Naive thymus-derived CD4-positive, alpha-beta T cell (primary cell): ENCODE measurements at regions of chr20 and their contacts with region 1.

Region 1: GRCh38 chr20:35146920-35147574 is at the start of gene EDEM2:
- DNase-seq: peak; percentile 87 to 94 (median 93)
- ATAC-seq: peak; percentile 88
- H3K4me3 ChIP-seq: peak within 1 kb of the TSS; percentile 88
- H3K4me3 Mint-ChIP-seq: peak within 1 kb of the TSS; percentile 90 to 99 (median 96)
- H3K27ac ChIP-seq: peak within 1 kb of the TSS; percentile 75
- H3K27ac Mint-ChIP-seq: peak within 1 kb of the TSS; percentile 82 to 96 (median 93)
- H3K4me1 ChIP-seq: peaks cover 12 to 14% of the 10 kb centered on the region in 2 donors
- H3K4me1 Mint-ChIP-seq: peaks cover 19 to 50% (median 35%) of the 10 kb centered on the region in 7 donors
- H3K27me3 ChIP-seq: no peaks in the 10 kb centered on the region
- H3K27me3 Mint-ChIP-seq: peaks cover 0 to 6% (median 0%) of the 10 kb centered on the region in 5 donors
- total RNA-seq, gene EDEM2: 15.4 to 30.9 (median 20.0) TPM

Region 2: DNA sequence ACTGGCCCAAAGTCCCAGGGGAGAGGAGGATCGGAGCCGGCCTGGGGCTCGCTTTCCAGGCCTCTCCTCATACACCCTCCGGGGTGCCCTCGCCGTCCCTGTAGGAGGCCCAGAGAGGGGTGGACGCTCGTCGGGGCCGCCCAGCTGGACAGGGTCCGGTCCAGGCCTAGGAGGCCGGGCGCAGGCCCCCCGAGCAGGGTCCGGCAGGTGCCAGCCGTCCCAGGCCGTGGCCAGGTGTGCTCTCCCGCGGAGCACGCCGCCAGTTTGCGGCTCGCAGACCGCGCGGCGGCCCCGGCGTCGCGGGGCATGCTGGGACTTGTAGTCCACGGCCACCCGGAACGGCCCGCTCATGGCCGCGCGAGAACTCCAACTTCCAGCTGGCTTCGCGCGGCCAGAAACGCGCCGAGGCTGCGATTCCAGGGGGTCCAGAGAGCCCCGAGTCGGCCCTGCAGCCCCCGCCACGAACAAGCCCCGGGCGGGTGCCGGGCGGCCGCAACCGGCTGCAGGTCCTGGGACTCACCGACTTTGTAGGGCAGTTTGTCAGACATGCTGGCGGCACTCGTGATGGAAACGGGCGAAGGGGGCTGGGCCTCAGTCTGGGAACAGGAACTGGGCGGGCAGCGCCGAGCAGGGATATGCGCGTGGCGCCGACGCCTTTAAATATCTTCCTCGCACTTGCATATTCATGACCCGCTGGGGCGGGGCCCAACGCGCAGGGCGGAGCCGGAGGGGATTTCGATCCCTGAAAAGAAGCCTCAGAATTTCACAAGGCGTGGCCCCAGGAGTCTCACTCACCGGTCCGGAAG is 844.1 kb before region 1 on chr20 and contains the start of gene AHCY:
- CTCF ChIA-PET with region 1: no interaction called
- POLR2A ChIA-PET with region 1: no interaction called
- intact Hi-C with region 1: loop called in 1 of 2 experiments (anchors 2 kb)
- DNase-seq: peak; percentile 84 to 95 (median 92)
- ATAC-seq: peak; percentile 96
- H3K4me3 ChIP-seq: peak within 1 kb of the TSS; percentile 91
- H3K4me3 Mint-ChIP-seq: peak within 1 kb of the TSS; percentile 90 to 96 (median 91)
- H3K27ac ChIP-seq: peak within 1 kb of the TSS; percentile 87
- H3K27ac Mint-ChIP-seq: peak within 1 kb of the TSS; percentile 89 to 95 (median 93)
- H3K4me1 ChIP-seq: peaks cover 3 to 6% of the 10 kb centered on the region in 2 donors
- H3K4me1 Mint-ChIP-seq: peaks cover 0 to 27% (median 14%) of the 10 kb centered on the region in 7 donors
- H3K27me3 ChIP-seq: no peaks in the 10 kb centered on the region
- H3K27me3 Mint-ChIP-seq: peaks cover 0 to 2% (median 0%) of the 10 kb centered on the region in 5 donors
- total RNA-seq, gene AHCY: 19.1 to 62.9 (median 23.7) TPM

Region 3: DNA sequence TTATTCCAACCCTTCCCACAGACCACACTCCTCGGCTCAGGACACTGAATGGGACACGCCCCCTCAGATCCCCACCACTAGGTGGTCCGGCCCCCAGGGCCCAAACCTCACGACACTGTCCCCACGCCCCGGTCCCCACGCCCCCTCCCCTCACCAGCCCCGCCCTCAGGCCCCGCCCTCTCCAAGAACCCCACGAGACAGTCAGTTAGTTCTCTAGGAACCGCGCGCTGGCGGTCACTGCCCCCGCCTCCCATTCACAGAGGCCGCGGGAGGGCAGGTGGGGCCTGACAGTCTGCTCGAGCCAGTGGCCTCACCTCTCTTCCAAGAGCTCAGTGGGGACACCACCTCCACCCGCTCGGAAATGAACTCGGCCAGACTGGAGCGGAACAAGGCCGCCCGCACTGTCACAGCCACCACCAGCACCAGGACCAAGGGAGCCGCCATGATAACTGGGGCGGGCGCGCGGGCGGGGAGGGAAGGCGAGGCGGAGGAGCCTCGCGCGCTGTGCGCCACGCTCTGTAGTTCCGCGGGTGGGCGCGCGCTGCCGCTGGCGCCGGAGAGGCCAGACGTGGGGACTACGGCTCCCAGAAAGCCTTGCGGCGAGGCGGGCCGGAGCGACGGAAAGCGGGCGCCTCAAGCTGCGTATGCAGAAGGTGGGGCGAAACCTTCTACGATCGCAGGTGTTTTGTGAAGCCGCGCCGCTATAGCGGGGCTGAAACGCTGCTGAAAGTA is 470.2 kb before region 1 on chr20 and contains the start of gene PIGU:
- CTCF ChIA-PET with region 1: no interaction called
- POLR2A ChIA-PET with region 1: no interaction called
- intact Hi-C with region 1: loop called in 1 of 2 experiments (anchors 1 kb)
- DNase-seq: peak; percentile 88 to 97 (median 96)
- ATAC-seq: peak; percentile 99
- H3K4me3 ChIP-seq: peak within 1 kb of the TSS; percentile 63
- H3K4me3 Mint-ChIP-seq: peak within 1 kb of the TSS; percentile 95 to 99 (median 96)
- H3K27ac ChIP-seq: peak within 1 kb of the TSS; percentile 95
- H3K27ac Mint-ChIP-seq: peak within 1 kb of the TSS; percentile 85 to 98 (median 97)
- H3K4me1 ChIP-seq: peaks cover 4 to 5% of the 10 kb centered on the region in 2 donors
- H3K4me1 Mint-ChIP-seq: peaks cover 14 to 37% (median 24%) of the 10 kb centered on the region in 7 donors
- H3K27me3 ChIP-seq: no peaks in the 10 kb centered on the region
- H3K27me3 Mint-ChIP-seq: no peaks in the 10 kb centered on the region
- total RNA-seq, gene PIGU: 8.6 to 21.3 (median 16.1) TPM

Region 4: GRCh38 chr20:35008411-35009342 is 138.4 kb before region 1 on chr20:
- CTCF ChIA-PET with region 1: no interaction called
- POLR2A ChIA-PET with region 1: no interaction called
- intact Hi-C with region 1: no loop called
- DNase-seq: no peak
- ATAC-seq: no peak
- H3K4me3 ChIP-seq: no peak overlapping the region
- H3K4me3 Mint-ChIP-seq: no peak overlapping the region
- H3K27ac ChIP-seq: no peak overlapping the region
- H3K27ac Mint-ChIP-seq: peak overlapping the region in 4 of 9 donors; percentile 25 to 45 (median 41)
- H3K4me1 ChIP-seq: no peaks in the 10 kb centered on the region
- H3K4me1 Mint-ChIP-seq: peaks cover 0 to 4% (median 0%) of the 10 kb centered on the region in 7 donors
- H3K27me3 ChIP-seq: no peaks in the 10 kb centered on the region
- H3K27me3 Mint-ChIP-seq: no peaks in the 10 kb centered on the region

Region 5: GRCh38 chr20:35063168-35063567 is 83.9 kb before region 1 on chr20:
- CTCF ChIA-PET with region 1: no interaction called
- POLR2A ChIA-PET with region 1: no interaction called
- intact Hi-C with region 1: no loop called
- DNase-seq: no peak
- ATAC-seq: no peak
- H3K4me3 ChIP-seq: no peak overlapping the region
- H3K4me3 Mint-ChIP-seq: no peak overlapping the region
- H3K27ac ChIP-seq: no peak overlapping the region
- H3K27ac Mint-ChIP-seq: peak overlapping the region in 1 of 9 donors; percentile 16
- H3K4me1 ChIP-seq: peaks cover 0 to 5% of the 10 kb centered on the region in 2 donors
- H3K4me1 Mint-ChIP-seq: peaks cover 45 to 91% (median 75%) of the 10 kb centered on the region in 7 donors
- H3K27me3 ChIP-seq: no peaks in the 10 kb centered on the region
- H3K27me3 Mint-ChIP-seq: no peaks in the 10 kb centered on the region

Region 6: DNA sequence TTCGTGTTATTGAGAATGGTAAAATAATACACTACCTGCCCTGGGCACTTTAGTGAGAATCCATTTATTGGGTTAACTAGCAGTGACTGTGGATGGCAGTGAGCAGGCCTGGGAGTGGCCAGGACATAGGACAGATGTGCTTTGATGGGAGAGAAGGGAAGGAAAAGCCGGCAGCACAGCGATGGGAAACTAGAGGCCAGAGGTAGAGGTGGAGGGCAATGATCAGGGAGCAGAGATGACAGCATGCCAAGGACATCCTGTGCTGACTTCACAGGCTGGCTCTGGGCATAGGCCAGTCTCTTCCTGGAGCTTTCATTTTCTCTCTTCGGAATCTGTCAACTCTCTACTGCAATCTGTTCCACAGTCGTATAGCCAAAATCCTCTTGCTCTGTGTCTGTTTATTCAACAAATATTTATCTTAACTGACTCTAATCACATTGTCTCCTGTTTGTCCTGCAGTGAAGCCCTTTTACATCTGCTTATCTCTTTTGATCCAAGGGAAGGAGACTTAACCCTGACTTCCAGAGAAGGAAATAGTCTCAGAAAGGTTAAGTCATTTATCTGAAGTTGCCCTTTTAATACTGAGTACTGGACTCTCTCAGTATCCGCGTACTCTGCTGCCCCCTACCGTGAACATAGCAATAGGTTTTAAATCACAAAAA is 61.0 kb after region 1 on chr20:
- CTCF ChIA-PET with region 1: interaction called, 6 read pairs
- POLR2A ChIA-PET with region 1: no interaction called
- intact Hi-C with region 1: loop called in 1 of 2 experiments (anchors 1 kb)
- DNase-seq: peak; percentile 46 to 75 (median 64)
- ATAC-seq: peak; percentile 96
- H3K4me3 ChIP-seq: no peak overlapping the region
- H3K4me3 Mint-ChIP-seq: no peak overlapping the region
- H3K27ac ChIP-seq: no peak overlapping the region
- H3K27ac Mint-ChIP-seq: no peak overlapping the region
- H3K4me1 ChIP-seq: no peaks in the 10 kb centered on the region
- H3K4me1 Mint-ChIP-seq: no peaks in the 10 kb centered on the region
- H3K27me3 ChIP-seq: no peaks in the 10 kb centered on the region
- H3K27me3 Mint-ChIP-seq: no peaks in the 10 kb centered on the region

Region 7: GRCh38 chr20:35226775-35227681 is 80.0 kb after region 1 on chr20:
- CTCF ChIA-PET with region 1: no interaction called
- POLR2A ChIA-PET with region 1: no interaction called
- intact Hi-C with region 1: no loop called
- DNase-seq: peak in 8 of 9 donors; percentile 18 to 69 (median 34)
- ATAC-seq: peak; percentile 77
- H3K4me3 ChIP-seq: no peak overlapping the region
- H3K4me3 Mint-ChIP-seq: peak overlapping the region; percentile 60 to 84 (median 78)
- H3K27ac ChIP-seq: no peak overlapping the region
- H3K27ac Mint-ChIP-seq: no peak overlapping the region
- H3K4me1 ChIP-seq: no peaks in the 10 kb centered on the region
- H3K4me1 Mint-ChIP-seq: peaks cover 5 to 16% (median 13%) of the 10 kb centered on the region in 7 donors
- H3K27me3 ChIP-seq: peaks cover 3 to 6% of the 10 kb centered on the region in 2 donors
- H3K27me3 Mint-ChIP-seq: peaks cover 29 to 52% (median 38%) of the 10 kb centered on the region in 5 donors

Region 8: GRCh38 chr20:35269055-35269781 is 122.2 kb after region 1 on chr20:
- CTCF ChIA-PET with region 1: no interaction called
- POLR2A ChIA-PET with region 1: interaction called, 3 read pairs
- intact Hi-C with region 1: loop called in 1 of 2 experiments (anchors 1 kb)
- DNase-seq: peak in 3 of 9 donors; percentile 37 to 54 (median 39)
- ATAC-seq: peak; percentile 77
- H3K4me3 ChIP-seq: no peak overlapping the region
- H3K4me3 Mint-ChIP-seq: no peak overlapping the region
- H3K27ac ChIP-seq: no peak overlapping the region
- H3K27ac Mint-ChIP-seq: peak overlapping the region in 2 of 9 donors; percentile 38 to 68
- H3K4me1 ChIP-seq: no peaks in the 10 kb centered on the region
- H3K4me1 Mint-ChIP-seq: peaks cover 0 to 21% (median 15%) of the 10 kb centered on the region in 7 donors
- H3K27me3 ChIP-seq: no peaks in the 10 kb centered on the region
- H3K27me3 Mint-ChIP-seq: no peaks in the 10 kb centered on the region

Region 9: DNA sequence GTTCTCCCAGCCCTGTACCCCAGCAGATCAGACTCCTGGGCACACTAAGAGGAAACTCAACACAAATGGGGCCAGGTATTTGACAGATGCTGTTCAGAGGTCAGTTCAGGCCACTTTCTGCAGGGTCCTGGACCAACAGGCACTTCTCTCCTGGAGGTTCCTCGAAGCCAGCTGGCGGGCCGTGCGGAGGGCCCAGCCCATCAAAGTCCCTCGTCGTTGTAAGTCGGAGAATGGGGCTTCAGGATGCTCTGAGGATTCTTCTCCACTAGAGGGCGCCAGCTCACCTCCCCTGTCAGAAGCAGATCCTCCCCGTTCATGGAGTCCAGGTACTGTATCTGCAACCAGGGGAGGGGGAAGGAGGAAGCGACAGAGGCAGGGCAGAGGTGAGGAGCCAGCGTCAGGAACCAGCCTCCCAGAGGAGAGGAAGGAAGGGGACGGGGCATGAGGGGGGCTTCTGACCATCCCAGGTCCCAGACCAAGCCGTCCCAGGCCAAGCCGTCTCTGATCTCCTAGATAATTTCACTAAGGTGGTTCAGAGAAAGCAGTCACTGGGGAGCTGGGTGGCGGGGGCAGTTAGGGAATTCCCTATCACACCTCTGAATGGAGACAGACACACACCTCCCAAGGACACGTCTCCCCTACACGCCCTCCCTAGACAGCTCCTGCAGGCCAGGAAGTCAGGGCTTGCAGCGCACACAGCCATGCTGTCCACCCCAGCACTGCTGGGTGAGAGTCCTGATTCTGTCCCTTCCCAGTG is 156.9 kb after region 1 on chr20:
- CTCF ChIA-PET with region 1: interaction called, 4 read pairs
- POLR2A ChIA-PET with region 1: no interaction called
- intact Hi-C with region 1: loop called in 1 of 2 experiments (anchors 1 kb)
- DNase-seq: peak; percentile 57 to 87 (median 81)
- ATAC-seq: peak; percentile 96
- H3K4me3 ChIP-seq: no peak overlapping the region
- H3K4me3 Mint-ChIP-seq: no peak overlapping the region
- H3K27ac ChIP-seq: no peak overlapping the region
- H3K27ac Mint-ChIP-seq: peak overlapping the region in 6 of 9 donors; percentile 8 to 78 (median 60)
- H3K4me1 ChIP-seq: no peaks in the 10 kb centered on the region
- H3K4me1 Mint-ChIP-seq: peaks cover 0 to 40% (median 9%) of the 10 kb centered on the region in 7 donors
- H3K27me3 ChIP-seq: no peaks in the 10 kb centered on the region
- H3K27me3 Mint-ChIP-seq: no peaks in the 10 kb centered on the region

Region 10: DNA sequence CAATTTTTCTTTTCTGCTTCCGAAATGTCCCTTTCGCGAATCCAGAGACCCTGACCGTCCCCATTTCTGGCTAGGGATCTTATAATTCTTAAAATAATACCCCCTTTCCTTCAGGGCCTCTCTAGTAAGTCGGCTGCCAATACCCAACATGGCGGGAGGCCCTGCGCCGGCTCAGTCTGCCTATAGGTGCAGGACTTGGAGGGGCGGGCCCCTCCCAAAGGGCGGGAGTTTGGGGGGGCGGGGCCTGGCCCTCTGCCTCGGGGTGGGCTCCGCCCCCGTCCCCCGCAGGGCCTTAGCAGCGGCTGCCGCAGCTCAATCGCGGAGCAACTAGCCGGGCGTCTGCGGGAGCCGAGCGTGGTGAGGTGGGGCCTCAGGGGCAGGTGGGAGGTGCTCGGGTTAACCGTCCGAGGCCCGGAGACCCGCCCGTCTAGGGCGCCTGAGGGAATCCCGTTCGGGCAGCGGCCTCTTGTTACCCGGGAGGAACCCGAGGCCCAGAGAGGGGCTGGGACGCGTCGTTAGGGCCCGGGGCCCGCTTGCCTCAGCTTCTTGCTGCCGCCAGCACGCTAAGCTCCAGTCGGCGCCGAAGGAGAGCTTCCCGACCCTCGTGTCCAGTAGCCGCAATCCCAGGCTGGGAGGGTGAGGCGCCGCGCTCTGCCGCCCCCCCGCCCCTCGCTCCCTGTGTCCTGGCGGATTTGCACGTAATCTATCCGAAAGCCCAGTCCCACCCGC is 308.0 kb after region 1 on chr20 and contains the start of gene CEP250:
- CTCF ChIA-PET with region 1: no interaction called
- POLR2A ChIA-PET with region 1: no interaction called
- intact Hi-C with region 1: loop called in 1 of 2 experiments (anchors 1 kb)
- DNase-seq: peak; percentile 89 to 97 (median 96)
- ATAC-seq: peak; percentile 99
- H3K4me3 ChIP-seq: peak within 1 kb of the TSS; percentile 94
- H3K4me3 Mint-ChIP-seq: peak within 1 kb of the TSS; percentile 82 to 98 (median 93)
- H3K27ac ChIP-seq: peak within 1 kb of the TSS; percentile 94
- H3K27ac Mint-ChIP-seq: peak within 1 kb of the TSS; percentile 86 to 99 (median 98)
- H3K4me1 ChIP-seq: no peaks in the 10 kb centered on the region
- H3K4me1 Mint-ChIP-seq: peaks cover 0 to 38% (median 23%) of the 10 kb centered on the region in 7 donors
- H3K27me3 ChIP-seq: no peaks in the 10 kb centered on the region
- H3K27me3 Mint-ChIP-seq: no peaks in the 10 kb centered on the region
- total RNA-seq, gene CEP250: 34.5 to 75.0 (median 70.7) TPM